SK-N-SH (cell line): ENCODE measurements at regions of chr11 and their contacts with region 1.

Region 1: DNA sequence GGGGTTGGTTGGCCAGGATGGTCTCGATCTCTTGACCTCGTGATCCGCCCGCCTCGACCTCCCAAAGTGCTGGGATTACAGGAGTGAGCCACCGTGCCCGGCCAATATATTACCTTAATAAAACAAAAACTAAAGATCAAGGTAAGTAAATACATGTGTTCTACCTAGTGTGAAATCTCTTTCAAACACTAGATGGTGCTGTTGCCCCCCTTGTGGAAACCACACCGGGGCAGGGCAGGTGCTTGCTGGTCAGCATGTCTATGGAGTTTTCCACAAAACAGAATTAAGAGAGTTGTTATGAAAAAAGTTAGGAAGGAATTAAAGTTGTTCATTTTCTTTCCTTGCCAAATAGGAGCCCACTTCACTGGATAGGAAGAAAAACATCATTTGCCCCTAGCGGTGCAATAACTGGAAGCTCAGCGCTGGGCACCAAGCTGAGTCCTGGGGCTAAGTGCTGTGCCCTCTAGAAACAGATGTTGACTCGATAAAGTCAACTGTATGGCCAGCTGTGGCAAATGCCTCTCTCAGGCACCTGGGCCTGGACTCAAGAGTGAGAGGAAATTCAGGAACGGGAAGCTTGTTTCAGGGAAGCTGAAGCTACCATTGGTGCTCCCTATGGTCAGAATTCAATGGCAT is 6.3 kb upstream of the KCNJ5 start:
- DNase-seq: peak; percentile 77
- H3K4me3 ChIP-seq: peak overlapping the region in 1 of 2 experiments; percentile 20; a peak in 1 of 4 replicates
- H3K27ac ChIP-seq: no peak overlapping the region
- H3K4me1 ChIP-seq: no peaks in the 10 kb centered on the region; a peak in 1 of 4 replicates
- H3K27me3 ChIP-seq: peaks cover 11% of the 10 kb centered on the region; the same call in 1 of the 2 replicates
- CTCF ChIP-seq: peak; percentile 94
- EP300 ChIP-seq: no peak
- RAD21 ChIP-seq: peak; percentile 96

Region 2: DNA sequence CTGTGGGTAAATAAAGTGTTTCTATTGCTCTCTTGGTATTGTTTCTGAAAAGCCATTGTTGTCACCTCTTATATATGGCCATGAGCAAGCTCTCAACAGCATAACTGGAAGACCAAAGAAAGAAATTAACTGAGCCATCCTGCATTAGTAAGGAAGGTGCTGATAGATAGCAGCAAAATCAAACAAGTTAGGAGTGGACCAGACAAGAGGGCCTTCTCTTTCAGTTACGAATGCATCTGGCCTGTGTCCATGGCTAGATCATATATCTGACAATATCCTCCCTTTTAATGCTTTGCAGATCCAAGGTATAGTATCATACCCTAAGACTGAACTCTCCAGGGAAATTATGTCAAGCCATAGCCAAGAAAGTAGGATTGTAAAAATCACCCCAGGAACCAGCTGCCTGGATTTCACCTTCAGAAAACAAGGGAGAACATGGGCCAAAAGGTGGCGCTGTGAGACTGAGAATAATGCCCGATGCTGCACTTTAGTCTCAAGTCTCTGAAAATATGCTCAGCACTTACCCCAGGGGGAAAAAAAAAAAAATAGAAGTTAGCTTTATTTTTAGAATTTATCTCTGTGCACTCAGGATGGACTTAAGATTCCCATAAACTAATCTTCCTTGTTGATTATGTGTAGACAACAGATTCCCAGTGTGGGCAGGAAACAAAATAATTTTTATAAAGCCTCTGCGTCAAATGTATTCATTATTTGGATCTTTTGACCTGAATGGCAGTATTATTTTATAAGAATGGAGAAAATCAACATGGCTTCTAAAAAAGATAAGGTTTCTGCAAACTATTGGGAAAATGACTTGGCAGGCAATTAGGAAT is 712.6 kb before region 1 on chr11:
- CTCF ChIA-PET with region 1: interaction called, 26 read pairs
- POLR2A ChIA-PET with region 1: no interaction called
- DNase-seq: peak; percentile 73
- H3K4me3 ChIP-seq: no peak overlapping the region; a peak in 1 of 4 replicates
- H3K27ac ChIP-seq: peak overlapping the region in 1 of 2 experiments; percentile 50; a peak in 2 of 4 replicates
- H3K4me1 ChIP-seq: peaks cover 3 to 5% of the 10 kb centered on the region in 2 experiments; a peak in 2 of 4 replicates
- H3K27me3 ChIP-seq: no peaks in the 10 kb centered on the region
- CTCF ChIP-seq: peak; percentile 87
- EP300 ChIP-seq: no peak
- RAD21 ChIP-seq: peak; percentile 98

Region 3: DNA sequence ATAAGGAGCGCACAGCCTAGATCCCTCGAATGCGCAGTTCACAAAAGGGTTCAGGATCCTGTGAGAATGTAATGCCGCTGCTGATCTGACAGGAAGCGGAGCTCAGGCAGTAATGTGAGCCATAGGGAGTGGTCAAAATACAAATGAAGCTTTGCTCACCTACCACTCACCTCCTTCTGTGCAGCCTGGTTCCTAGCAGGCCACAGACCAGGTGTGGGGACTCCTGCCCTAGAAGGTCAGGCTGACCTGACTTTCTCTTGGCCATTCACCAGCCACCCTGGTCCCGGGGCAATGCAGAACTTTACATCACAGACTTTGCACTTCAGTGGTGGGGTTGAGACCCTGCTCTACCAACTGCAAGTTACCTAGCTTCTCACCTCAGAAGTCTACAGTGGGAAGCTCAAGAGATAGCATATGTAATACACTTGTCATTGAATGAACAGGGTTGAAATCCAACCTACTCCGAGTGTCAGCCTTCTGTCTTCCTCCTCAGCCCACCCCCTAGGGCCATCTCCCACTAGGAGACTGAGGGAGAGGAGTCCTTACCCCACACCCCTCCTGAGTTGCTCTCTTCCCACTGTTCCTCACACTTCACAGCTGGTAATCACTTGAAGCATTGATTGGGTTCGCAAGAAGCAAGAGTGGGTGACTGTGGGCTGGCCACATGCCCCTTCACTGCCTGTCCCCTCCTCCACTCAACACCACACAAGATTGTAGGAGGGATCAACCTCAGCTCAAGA is 15.8 kb before region 1 on chr11:
- CTCF ChIA-PET with region 1: interaction called, 17 read pairs
- POLR2A ChIA-PET with region 1: no interaction called
- DNase-seq: no peak
- H3K4me3 ChIP-seq: no peak overlapping the region
- H3K27ac ChIP-seq: no peak overlapping the region
- H3K4me1 ChIP-seq: no peaks in the 10 kb centered on the region
- H3K27me3 ChIP-seq: no peaks in the 10 kb centered on the region
- CTCF ChIP-seq: no peak
- EP300 ChIP-seq: no peak
- RAD21 ChIP-seq: no peak

Region 4: GRCh38 chr11:128905345-128906184 is 20.7 kb after region 1 on chr11:
- CTCF ChIA-PET with region 1: interaction called, 201 read pairs
- POLR2A ChIA-PET with region 1: no interaction called
- DNase-seq: peak; percentile 86
- H3K4me3 ChIP-seq: peak overlapping the region; percentile 46 to 53
- H3K27ac ChIP-seq: no peak overlapping the region; a peak in 1 of 4 replicates
- H3K4me1 ChIP-seq: peaks cover 16 to 26% of the 10 kb centered on the region in 2 experiments; a peak in 3 of 4 replicates
- H3K27me3 ChIP-seq: no peaks in the 10 kb centered on the region
- CTCF ChIP-seq: peak; percentile 54
- EP300 ChIP-seq: no peak
- RAD21 ChIP-seq: no peak

Region 5: DNA sequence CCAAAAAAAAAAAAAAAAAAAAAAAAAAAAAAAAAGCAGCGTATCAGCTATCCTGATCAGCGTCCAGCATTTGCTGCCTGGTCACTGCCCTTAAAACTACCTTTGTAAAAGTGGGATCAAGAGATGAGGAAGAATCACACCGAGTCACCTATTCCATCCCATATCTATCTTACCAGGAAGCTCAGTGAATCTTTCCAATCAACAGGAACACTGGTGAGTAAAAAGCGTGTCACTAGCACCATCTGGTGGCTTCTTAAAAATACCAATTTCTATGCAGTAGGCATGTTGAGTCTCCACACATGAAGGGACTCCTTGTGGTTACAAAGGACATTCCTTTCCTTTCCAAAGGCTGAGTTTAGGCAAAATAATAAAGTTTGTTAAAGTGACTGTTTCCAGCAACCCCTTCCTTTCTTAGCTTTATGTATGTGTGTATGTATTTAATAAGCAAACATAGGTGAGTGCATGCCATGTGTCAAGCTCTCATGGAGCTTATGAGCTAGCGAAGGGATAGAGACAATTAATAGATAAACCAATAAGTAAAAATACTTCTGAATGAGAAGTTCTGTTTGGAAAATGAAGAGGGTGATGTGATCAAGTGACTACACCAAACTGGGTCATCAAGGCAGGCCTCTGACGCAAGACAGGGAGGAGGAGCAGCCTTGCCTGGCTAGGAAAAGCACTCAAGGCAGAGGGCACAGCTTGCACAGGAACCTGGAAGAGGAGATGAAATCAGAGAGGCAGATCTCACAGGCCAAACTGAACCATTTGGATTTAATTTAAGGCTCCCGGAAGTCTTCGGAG is 71.8 kb after region 1 on chr11:
- CTCF ChIA-PET with region 1: interaction called, 872 read pairs
- POLR2A ChIA-PET with region 1: interaction called, 4 read pairs
- DNase-seq: peak; percentile 78
- H3K4me3 ChIP-seq: no peak overlapping the region; a peak in 1 of 4 replicates
- H3K27ac ChIP-seq: no peak overlapping the region
- H3K4me1 ChIP-seq: no peaks in the 10 kb centered on the region; a peak in 1 of 4 replicates
- H3K27me3 ChIP-seq: no peaks in the 10 kb centered on the region
- CTCF ChIP-seq: peak; percentile 81
- EP300 ChIP-seq: no peak
- RAD21 ChIP-seq: peak; percentile 97

Region 6: GRCh38 chr11:129331871-129332274 is 447.1 kb after region 1 on chr11:
- CTCF ChIA-PET with region 1: interaction called, 24 read pairs
- POLR2A ChIA-PET with region 1: no interaction called
- DNase-seq: peak; percentile 77
- H3K4me3 ChIP-seq: peak overlapping the region in 1 of 2 experiments; percentile 2; a peak in 1 of 4 replicates
- H3K27ac ChIP-seq: no peak overlapping the region
- H3K4me1 ChIP-seq: no peaks in the 10 kb centered on the region; a peak in 1 of 4 replicates
- H3K27me3 ChIP-seq: no peaks in the 10 kb centered on the region
- CTCF ChIP-seq: peak; percentile 92
- EP300 ChIP-seq: no peak
- RAD21 ChIP-seq: peak; percentile 94

Region 7: DNA sequence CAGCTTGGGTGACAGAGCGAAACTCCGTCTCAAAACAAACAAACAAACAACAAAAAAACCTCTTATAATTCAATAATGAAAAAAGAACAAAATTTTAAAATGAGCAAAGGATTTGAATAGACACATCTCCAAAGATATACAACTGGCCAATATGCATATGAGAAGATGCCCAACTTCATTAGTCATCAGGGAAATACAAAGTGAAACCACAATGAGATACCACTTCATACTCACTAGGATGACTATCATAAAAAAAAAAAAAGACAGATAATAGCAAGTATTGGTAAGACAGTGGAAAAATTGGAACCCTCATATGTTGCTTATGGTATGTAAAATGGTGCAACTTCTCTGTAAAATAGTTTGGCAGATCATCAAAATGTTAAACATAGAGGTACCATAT is 462.1 kb after region 1 on chr11:
- CTCF ChIA-PET with region 1: no interaction called
- POLR2A ChIA-PET with region 1: no interaction called
- DNase-seq: no peak
- H3K4me3 ChIP-seq: no peak overlapping the region
- H3K27ac ChIP-seq: no peak overlapping the region
- H3K4me1 ChIP-seq: no peaks in the 10 kb centered on the region
- H3K27me3 ChIP-seq: peaks cover 8% of the 10 kb centered on the region; the same call in 1 of the 2 replicates
- CTCF ChIP-seq: no peak
- EP300 ChIP-seq: no peak
- RAD21 ChIP-seq: no peak

Region 8: DNA sequence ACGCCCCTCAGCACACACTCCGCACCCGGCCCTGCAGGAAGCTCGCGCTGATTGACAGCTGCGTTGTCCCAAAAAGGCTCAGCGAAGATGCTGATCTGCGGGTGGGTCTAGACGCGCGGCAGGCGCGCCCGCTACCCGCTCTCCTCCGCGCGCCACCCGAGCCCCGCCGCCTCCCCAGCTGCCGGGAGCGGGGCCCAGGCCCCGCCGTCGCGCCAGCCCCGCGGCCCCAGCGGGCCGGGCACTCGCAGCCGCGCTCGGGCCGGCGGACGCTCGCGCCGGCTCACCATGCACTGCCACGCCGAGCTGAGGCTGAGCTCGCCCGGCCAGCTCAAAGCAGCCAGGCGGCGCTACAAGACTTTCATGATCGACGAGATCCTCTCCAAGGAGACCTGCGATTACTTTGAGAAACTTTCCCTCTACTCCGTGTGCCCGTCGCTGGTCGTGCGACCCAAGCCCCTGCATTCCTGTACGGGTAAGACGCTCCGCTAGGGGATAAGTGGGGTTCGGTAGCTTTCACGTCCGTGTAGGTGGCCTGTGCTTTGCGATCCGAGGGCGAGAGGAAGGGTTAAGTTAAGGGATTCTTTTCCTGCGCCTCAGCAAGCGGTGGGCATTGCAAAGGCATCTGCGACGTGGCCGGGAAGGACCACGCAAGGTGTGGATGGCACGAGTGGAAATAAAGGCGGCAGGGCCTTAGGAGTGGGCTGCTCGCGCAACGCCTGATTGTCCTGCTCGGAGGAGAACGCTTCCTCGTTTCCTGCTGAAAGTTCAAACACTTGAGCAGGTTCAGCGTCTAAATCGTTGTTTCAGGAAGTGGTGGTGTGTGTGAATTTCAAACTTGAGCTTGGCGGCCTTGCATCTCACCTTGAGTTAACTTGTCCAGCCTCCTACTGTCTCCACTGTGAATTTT is 491.2 kb after region 1 on chr11 and contains the start of gene BARX2:
- CTCF ChIA-PET with region 1: no interaction called
- POLR2A ChIA-PET with region 1: no interaction called
- DNase-seq: peak; percentile 70
- H3K4me3 ChIP-seq: no peak within 1 kb of the TSS; a peak in 2 of 4 replicates
- H3K27ac ChIP-seq: no peak within 1 kb of the TSS
- H3K4me1 ChIP-seq: peaks cover 0 to 7% of the 10 kb centered on the region in 2 experiments; a peak in 1 of 4 replicates
- H3K27me3 ChIP-seq: peaks cover 93% of the 10 kb centered on the region
- CTCF ChIP-seq: peak; percentile 49
- EP300 ChIP-seq: no peak
- RAD21 ChIP-seq: peak; percentile 59
- polyA plus RNA-seq, gene BARX2: not detected in 2 replicates